Activated naive CD4-positive, alpha-beta T cell treated with anti-CD3 and anti-CD28 coated beads for 36 hours (primary cell): ENCODE measurements at regions of chr3 and their contacts with region 1.

Region 1: DNA sequence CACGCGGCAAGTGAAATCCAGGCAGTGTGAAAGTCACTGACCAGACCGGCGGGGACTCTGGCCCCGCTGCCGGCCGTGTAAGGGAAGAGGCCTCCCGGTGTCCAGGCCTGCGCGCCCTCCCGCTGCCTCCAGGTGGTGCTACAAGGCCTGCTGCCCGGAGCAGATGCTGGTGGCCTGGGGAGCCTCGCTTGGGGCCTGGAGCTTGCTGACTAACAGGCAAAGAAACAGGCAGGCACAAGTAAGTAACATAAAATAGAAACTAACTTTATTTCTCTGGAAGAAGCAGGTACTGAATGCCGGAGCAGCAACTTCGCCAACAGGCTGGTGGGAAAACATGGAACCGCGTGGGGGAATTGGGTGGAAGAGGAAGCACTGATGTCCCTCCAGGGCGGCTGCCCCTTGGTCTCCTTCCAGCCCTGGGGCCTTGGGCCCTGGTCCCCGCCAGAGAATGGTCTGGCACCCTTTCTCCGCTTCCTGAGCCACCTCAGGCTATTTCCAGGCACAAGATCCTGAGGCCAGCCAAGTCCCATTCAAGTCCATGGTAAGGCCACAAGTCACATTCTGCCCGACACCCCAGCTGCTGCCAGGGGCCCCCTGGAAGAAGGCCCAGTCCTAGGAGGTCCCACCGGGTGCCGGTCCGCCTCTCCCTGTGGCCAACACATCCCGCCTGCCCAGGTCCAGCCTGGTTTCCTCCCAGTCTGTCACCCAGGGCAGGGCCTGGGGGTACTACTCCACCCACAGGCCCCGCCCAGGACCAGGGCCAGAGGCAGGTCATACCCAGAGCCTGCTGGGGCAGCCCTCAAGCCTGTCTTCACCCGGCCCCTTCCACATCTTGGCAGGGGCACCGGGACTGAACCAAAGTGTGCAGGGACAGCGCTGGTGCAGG is 45.0 kb downstream of the TNK2 start:
- DNase-seq: peak; percentile 79
- H3K4me3 Mint-ChIP-seq: no peak overlapping the region
- H3K27ac Mint-ChIP-seq: peak overlapping the region; percentile 36
- H3K4me1 Mint-ChIP-seq: peaks cover 8% of the 10 kb centered on the region
- H3K27me3 Mint-ChIP-seq: no peaks in the 10 kb centered on the region

Region 2: DNA sequence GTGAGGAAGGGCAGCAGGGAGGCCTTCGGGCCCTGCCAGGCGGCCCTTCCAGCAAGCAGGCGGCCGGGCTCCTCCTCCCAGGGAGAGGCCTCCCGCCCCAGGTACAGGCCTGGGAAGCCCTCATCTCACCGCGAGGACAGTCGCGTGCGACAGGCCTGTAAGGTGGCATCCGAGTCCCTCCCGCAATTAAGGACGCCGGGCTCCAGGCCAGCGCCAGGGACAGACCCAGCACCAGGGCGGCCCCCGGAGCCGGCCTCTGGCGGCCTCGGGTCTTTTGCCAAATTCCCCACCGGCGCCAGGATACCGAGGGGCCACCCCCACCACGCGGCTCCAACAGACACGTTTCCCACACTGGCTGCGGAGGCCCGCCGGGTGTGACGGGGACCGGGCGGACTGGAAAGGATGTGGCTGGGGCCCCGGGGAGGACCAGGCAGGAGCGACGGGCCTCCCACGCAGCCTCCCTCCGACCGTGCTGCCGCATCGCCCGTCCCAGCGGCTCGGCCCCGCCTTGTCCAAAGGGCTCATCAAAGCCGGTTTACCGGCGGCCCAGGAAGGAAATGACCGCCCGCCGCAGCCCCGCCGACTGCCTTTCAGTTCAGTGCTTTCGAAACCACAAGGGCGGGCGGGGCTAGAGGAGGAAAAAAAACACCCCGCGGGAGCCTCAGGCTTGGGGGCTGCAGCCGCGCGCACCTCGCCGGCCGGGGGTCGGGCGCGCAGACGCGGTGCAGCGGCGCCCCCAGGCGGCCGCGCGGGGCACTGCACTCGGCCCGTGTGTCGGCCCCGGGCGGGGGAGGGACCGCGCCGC is 603.7 kb before region 1 on chr3:
- CTCF ChIA-PET with region 1: no interaction called
- intact Hi-C with region 1: no loop called
- DNase-seq: peak; percentile 79
- H3K4me3 Mint-ChIP-seq: peak overlapping the region; percentile 55
- H3K27ac Mint-ChIP-seq: no peak overlapping the region
- H3K4me1 Mint-ChIP-seq: peaks cover 13% of the 10 kb centered on the region
- H3K27me3 Mint-ChIP-seq: no peaks in the 10 kb centered on the region

Region 3: GRCh38 chr3:195894780-195895607 is 31.6 kb after region 1 on chr3:
- CTCF ChIA-PET with region 1: interaction called, 70 read pairs
- intact Hi-C with region 1: loop called (anchors 1 kb)
- DNase-seq: peak; percentile 81
- H3K4me3 Mint-ChIP-seq: peak overlapping the region; percentile 87
- H3K27ac Mint-ChIP-seq: peak overlapping the region; percentile 86
- H3K4me1 Mint-ChIP-seq: peaks cover 44% of the 10 kb centered on the region
- H3K27me3 Mint-ChIP-seq: no peaks in the 10 kb centered on the region

Region 4: GRCh38 chr3:195918176-195918575 is 54.8 kb after region 1 on chr3:
- CTCF ChIA-PET with region 1: interaction called, 96 read pairs
- intact Hi-C with region 1: loop called (anchors 1 kb)
- DNase-seq: no peak
- H3K4me3 Mint-ChIP-seq: no peak overlapping the region
- H3K27ac Mint-ChIP-seq: no peak overlapping the region
- H3K4me1 Mint-ChIP-seq: peaks cover 12% of the 10 kb centered on the region
- H3K27me3 Mint-ChIP-seq: no peaks in the 10 kb centered on the region